ENCODE measurements at regions of chr7 and their contacts with region 1.

Region 1: DNA sequence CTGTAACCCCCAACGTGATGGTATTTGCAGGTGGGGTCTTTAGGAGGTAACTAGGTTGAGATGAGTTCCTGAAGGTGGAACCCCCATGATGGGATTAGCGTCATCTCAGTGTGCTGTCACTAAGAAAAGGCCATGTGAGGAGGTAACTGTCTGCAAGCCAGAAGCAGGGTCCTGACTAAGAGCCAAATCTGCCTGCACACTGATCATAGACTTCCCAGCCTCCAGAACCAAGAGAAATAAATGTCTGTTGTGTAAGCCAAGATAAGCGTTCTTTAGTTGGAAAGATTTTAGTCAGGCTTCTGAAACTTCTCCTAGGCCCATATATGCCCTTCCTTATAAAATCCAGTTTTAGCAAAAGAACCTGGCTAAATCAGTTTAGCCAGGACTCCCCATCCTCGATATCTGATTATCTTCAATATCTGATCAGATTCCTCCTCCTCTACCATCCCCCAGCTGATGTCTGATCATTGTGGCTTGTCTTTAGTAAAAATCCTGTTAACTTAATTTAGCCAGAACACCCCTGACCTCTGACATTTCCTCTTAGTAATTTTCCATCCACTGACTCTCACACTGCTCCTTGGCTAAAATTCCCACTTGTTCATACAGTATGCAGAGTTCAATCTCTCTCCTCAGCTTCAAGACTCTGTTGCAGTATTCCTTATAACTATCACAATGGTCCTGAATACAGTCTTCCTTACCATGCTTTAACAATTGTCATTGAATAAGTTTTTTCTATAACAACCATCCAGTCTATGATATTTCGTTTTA is 835.4 kb upstream of the PHF14 start:
- DNase-seq: no peak
- H3K4me3 ChIP-seq: no peak overlapping the region
- H3K27ac ChIP-seq: no peak overlapping the region
- H3K4me1 ChIP-seq: no peaks in the 10 kb centered on the region
- H3K27me3 ChIP-seq: no peaks in the 10 kb centered on the region
- CTCF ChIP-seq: no peak
- EP300 ChIP-seq: no peak
- POLR2A ChIP-seq: no peak

Region 2: GRCh38 chr7:9391221-9391620 is 747.0 kb before region 1 on chr7:
- in situ Hi-C with region 1: no loop called
- intact Hi-C with region 1: no loop called
- DNase-seq: no peak
- H3K4me3 ChIP-seq: no peak overlapping the region
- H3K27ac ChIP-seq: peak overlapping the region in 3 of 4 donors; percentile 22 to 63 (median 31)
- H3K4me1 ChIP-seq: no peaks in the 10 kb centered on the region
- H3K27me3 ChIP-seq: no peaks in the 10 kb centered on the region
- CTCF ChIP-seq: no peak
- EP300 ChIP-seq: no peak
- POLR2A ChIP-seq: no peak

Region 3: GRCh38 chr7:10104292-10104691 is 34.0 kb before region 1 on chr7:
- in situ Hi-C with region 1: no loop called
- intact Hi-C with region 1: loop called (anchors 2 kb)
- DNase-seq: no peak
- H3K4me3 ChIP-seq: no peak overlapping the region
- H3K27ac ChIP-seq: no peak overlapping the region
- H3K4me1 ChIP-seq: no peaks in the 10 kb centered on the region
- H3K27me3 ChIP-seq: no peaks in the 10 kb centered on the region
- CTCF ChIP-seq: no peak
- EP300 ChIP-seq: no peak
- POLR2A ChIP-seq: no peak